ENCODE measurements at regions of chr11 and their contacts with region 1.

Region 1: GRCh38 chr11:65013692-65014145 is 241 bp upstream of the ARL2 start:
- DNase-seq: peak in 1 of 2 experiments; percentile 96
- H3K4me3 ChIP-seq: peak overlapping the region; percentile 62
- H3K4me3 Mint-ChIP-seq: peak overlapping the region; percentile 83
- H3K27ac Mint-ChIP-seq: peak overlapping the region; percentile 90
- H3K4me1 ChIP-seq: peaks cover 16% of the 10 kb centered on the region
- H3K4me1 Mint-ChIP-seq: peaks cover 22% of the 10 kb centered on the region
- H3K27me3 ChIP-seq: no peaks in the 10 kb centered on the region
- H3K27me3 Mint-ChIP-seq: no peaks in the 10 kb centered on the region
- CTCF ChIP-seq: peak in 1 of 2 experiments; percentile 71

Region 2: GRCh38 chr11:64688534-64688982 is 325.2 kb before region 1 on chr11:
- CTCF ChIA-PET with region 1: no interaction called
- POLR2A ChIA-PET with region 1: no interaction called
- intact Hi-C with region 1: no loop called
- DNase-seq: peak; percentile 90 to 95
- H3K4me3 ChIP-seq: peak overlapping the region; percentile 44
- H3K4me3 Mint-ChIP-seq: peak overlapping the region; percentile 68
- H3K27ac Mint-ChIP-seq: no peak overlapping the region
- H3K4me1 ChIP-seq: no peaks in the 10 kb centered on the region
- H3K4me1 Mint-ChIP-seq: peaks cover 8% of the 10 kb centered on the region
- H3K27me3 ChIP-seq: peaks cover 2% of the 10 kb centered on the region
- H3K27me3 Mint-ChIP-seq: peaks cover 20% of the 10 kb centered on the region
- CTCF ChIP-seq: peak; percentile 94

Region 3: GRCh38 chr11:64887757-64888405 is 125.8 kb before region 1 on chr11:
- CTCF ChIA-PET with region 1: interaction called, 7 read pairs
- POLR2A ChIA-PET with region 1: no interaction called
- intact Hi-C with region 1: loop called (anchors 2 kb)
- DNase-seq: peak; percentile 85 to 87
- H3K4me3 ChIP-seq: no peak overlapping the region
- H3K4me3 Mint-ChIP-seq: peak overlapping the region; percentile 62
- H3K27ac Mint-ChIP-seq: peak overlapping the region; percentile 82
- H3K4me1 ChIP-seq: peaks cover 78% of the 10 kb centered on the region
- H3K4me1 Mint-ChIP-seq: peaks cover 55% of the 10 kb centered on the region
- H3K27me3 ChIP-seq: no peaks in the 10 kb centered on the region
- H3K27me3 Mint-ChIP-seq: no peaks in the 10 kb centered on the region
- CTCF ChIP-seq: peak; percentile 94 to 95

Region 4: DNA sequence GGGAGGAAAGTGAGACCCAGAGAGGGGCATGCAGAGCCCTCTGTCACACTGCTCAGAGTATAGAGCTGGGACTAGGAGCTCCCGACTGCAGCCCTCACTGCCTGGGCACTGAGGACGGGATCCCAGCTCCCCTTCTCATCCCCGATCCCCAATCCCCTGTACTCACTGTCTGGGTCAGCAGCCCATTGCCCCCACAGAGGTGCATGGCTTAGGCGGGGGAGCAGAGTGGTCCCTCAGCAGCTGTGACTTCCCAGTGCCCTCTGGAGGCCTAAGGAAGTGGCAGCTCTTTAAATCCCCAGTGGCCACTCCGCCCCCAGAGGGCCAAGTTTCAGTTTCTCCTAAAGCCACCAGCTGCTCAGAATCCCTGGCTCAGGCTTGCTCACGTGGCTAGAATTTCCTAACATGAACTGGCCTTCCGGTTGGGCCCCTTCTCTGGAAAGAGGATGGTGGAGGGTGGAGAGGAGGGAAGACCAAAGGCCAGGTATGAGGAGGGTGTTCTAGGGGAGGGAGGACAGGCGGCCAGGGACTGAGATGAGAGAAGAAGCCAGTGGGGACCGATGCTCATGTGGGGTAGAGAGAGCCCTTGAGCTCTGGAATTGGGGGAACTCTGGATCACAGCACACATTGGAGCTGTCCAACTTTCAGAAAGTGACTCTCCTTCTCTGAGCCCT is 16.9 kb before region 1 on chr11 and contains the start of gene BATF2:
- CTCF ChIA-PET with region 1: interaction called, 15 read pairs
- POLR2A ChIA-PET with region 1: interaction called, 9 read pairs
- intact Hi-C with region 1: no loop called
- DNase-seq: peak; percentile 79 to 84
- H3K4me3 ChIP-seq: no peak within 1 kb of the TSS
- H3K4me3 Mint-ChIP-seq: peak within 1 kb of the TSS; percentile 56
- H3K27ac Mint-ChIP-seq: peak within 1 kb of the TSS; percentile 63
- H3K4me1 ChIP-seq: peaks cover 37% of the 10 kb centered on the region
- H3K4me1 Mint-ChIP-seq: peaks cover 26% of the 10 kb centered on the region
- H3K27me3 ChIP-seq: no peaks in the 10 kb centered on the region
- H3K27me3 Mint-ChIP-seq: no peaks in the 10 kb centered on the region
- CTCF ChIP-seq: peak; percentile 45 to 69
- total RNA-seq, gene BATF2: 0.79 and 1.4 TPM in 2 replicates

Region 5: GRCh38 chr11:65040847-65041621 is 27.3 kb after region 1 on chr11 and contains the start of gene SAC3D1:
- CTCF ChIA-PET with region 1: interaction called, 9 read pairs
- POLR2A ChIA-PET with region 1: interaction called, 4 read pairs
- intact Hi-C with region 1: loop called (anchors 1 kb)
- DNase-seq: peak; percentile 97 to 98
- H3K4me3 ChIP-seq: peak within 1 kb of the TSS; percentile 89
- H3K4me3 Mint-ChIP-seq: peak within 1 kb of the TSS; percentile 89
- H3K27ac Mint-ChIP-seq: peak within 1 kb of the TSS; percentile 83
- H3K4me1 ChIP-seq: peaks cover 11% of the 10 kb centered on the region; the same call in 1 of the 2 replicates
- H3K4me1 Mint-ChIP-seq: no peaks in the 10 kb centered on the region
- H3K27me3 ChIP-seq: no peaks in the 10 kb centered on the region
- H3K27me3 Mint-ChIP-seq: no peaks in the 10 kb centered on the region
- CTCF ChIP-seq: no peak
- total RNA-seq, gene SAC3D1: 21.2 and 21.6 TPM in 2 replicates

Region 6: DNA sequence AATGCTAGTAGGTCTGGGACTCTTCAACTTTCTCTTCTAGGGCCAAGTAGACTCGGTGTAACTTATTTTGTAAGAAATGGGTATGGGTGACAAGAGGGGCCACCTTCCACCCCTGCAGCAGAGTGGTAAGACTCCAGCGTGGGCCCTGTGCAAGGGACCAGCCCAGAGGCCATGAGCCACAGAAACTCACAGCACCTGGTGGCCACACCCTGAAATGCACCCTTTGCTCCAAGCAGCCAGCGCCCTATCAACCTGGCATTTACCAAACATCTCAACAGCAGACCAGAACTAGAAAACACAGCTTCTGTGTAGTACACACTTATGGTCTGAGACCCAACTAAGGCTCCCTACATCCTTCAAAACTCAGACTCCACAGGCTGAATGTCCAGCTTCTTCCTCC is 64.4 kb after region 1 on chr11:
- CTCF ChIA-PET with region 1: interaction called, 3 read pairs
- POLR2A ChIA-PET with region 1: no interaction called
- intact Hi-C with region 1: loop called (anchors 2 kb)
- DNase-seq: peak; percentile 63 to 76
- H3K4me3 ChIP-seq: no peak overlapping the region
- H3K4me3 Mint-ChIP-seq: no peak overlapping the region
- H3K27ac Mint-ChIP-seq: peak overlapping the region; percentile 32
- H3K4me1 ChIP-seq: peaks cover 6% of the 10 kb centered on the region; the same call in 1 of the 2 replicates
- H3K4me1 Mint-ChIP-seq: peaks cover 18% of the 10 kb centered on the region
- H3K27me3 ChIP-seq: no peaks in the 10 kb centered on the region
- H3K27me3 Mint-ChIP-seq: no peaks in the 10 kb centered on the region
- CTCF ChIP-seq: peak; percentile 61 to 79